Activated T-helper 2 cell treated with anti-CD3 and anti-CD28 coated beads, Interferon-gamma antibody, Interleukin-2, Interleukin-4, amounts not matched to agents 10 μg/mL and 5 μg/mL and 100 μg/mL, durations not matched to agents 14 hours and 24 hours and 36 hours (primary cell): ENCODE measurements at regions of chr17 and their contacts with region 1.

Region 1: GRCh38 chr17:40362696-40363110 is 1.8 kb downstream of the GJD3 start:
- DNase-seq: peak; percentile 85
- H3K4me3 Mint-ChIP-seq: peak overlapping the region; percentile 73
- H3K27ac Mint-ChIP-seq: no peak overlapping the region
- H3K4me1 Mint-ChIP-seq: peaks cover 17% of the 10 kb centered on the region
- H3K27me3 Mint-ChIP-seq: peaks cover 2% of the 10 kb centered on the region

Region 2: DNA sequence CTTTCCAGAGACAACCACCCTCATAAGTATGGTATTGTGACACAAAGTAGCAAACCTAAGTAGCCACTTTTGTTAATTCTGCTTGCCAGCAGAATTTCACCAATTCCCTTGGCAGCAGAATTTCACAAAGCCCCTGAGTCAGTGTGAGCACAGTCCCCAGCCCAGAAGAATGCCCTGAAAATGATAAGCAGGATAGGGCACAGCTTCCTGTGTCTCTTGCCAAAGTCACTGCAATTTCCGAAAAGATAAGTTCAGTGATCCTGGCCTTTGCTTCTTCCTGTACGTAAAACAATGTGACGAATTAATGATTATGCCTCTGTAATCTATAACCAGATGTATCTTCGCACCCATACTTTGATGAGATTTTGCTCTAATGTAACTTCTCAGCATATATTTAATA is 159.6 kb before region 1 on chr17:
- intact Hi-C with region 1: loop called (anchors 5 kb)
- DNase-seq: no peak
- H3K4me3 Mint-ChIP-seq: no peak overlapping the region
- H3K27ac Mint-ChIP-seq: no peak overlapping the region
- H3K4me1 Mint-ChIP-seq: peaks cover 3% of the 10 kb centered on the region
- H3K27me3 Mint-ChIP-seq: peaks cover 10% of the 10 kb centered on the region

Region 3: DNA sequence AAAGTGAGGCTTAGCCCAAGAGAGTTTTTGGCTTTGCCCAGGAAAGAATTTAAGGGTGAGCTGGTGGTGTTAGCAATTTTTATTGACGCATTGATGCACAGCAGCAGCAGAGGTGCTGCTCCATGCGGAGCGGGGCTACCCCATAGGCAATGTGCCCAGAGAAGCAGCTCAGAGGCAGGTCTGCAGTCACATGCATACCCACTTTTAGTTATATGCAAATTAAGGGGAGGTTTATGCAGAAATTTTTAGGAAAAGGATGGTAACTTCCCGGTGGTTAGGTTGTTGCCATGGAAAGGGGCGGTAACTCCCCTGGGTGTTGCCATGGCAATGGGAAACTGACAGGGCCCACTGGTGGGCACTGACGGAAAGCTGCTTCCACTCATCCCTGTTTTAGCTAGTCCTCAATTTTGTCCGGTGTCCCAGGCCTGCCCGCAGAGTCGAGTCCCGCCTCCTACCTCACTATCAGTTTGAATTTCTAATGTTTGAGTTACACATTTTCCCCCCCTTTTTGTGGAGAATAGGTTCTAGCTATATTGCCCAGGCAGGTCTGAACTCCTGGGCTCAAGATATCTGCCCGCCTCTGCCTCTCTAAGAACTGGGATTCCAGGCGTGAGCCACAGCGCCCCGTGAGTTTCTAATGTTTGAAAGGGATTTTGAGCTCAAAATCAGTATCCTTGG is 12.3 kb after region 1 on chr17:
- intact Hi-C with region 1: no loop called
- DNase-seq: no peak
- H3K4me3 Mint-ChIP-seq: no peak overlapping the region
- H3K27ac Mint-ChIP-seq: no peak overlapping the region
- H3K4me1 Mint-ChIP-seq: peaks cover 29% of the 10 kb centered on the region
- H3K27me3 Mint-ChIP-seq: peaks cover 2% of the 10 kb centered on the region

Region 4: GRCh38 chr17:40399185-40399584 is 36.5 kb after region 1 on chr17:
- intact Hi-C with region 1: loop called (anchors 5 kb)
- DNase-seq: no peak
- H3K4me3 Mint-ChIP-seq: no peak overlapping the region
- H3K27ac Mint-ChIP-seq: peak overlapping the region; percentile 60
- H3K4me1 Mint-ChIP-seq: peaks cover 26% of the 10 kb centered on the region
- H3K27me3 Mint-ChIP-seq: no peaks in the 10 kb centered on the region

Region 5: DNA sequence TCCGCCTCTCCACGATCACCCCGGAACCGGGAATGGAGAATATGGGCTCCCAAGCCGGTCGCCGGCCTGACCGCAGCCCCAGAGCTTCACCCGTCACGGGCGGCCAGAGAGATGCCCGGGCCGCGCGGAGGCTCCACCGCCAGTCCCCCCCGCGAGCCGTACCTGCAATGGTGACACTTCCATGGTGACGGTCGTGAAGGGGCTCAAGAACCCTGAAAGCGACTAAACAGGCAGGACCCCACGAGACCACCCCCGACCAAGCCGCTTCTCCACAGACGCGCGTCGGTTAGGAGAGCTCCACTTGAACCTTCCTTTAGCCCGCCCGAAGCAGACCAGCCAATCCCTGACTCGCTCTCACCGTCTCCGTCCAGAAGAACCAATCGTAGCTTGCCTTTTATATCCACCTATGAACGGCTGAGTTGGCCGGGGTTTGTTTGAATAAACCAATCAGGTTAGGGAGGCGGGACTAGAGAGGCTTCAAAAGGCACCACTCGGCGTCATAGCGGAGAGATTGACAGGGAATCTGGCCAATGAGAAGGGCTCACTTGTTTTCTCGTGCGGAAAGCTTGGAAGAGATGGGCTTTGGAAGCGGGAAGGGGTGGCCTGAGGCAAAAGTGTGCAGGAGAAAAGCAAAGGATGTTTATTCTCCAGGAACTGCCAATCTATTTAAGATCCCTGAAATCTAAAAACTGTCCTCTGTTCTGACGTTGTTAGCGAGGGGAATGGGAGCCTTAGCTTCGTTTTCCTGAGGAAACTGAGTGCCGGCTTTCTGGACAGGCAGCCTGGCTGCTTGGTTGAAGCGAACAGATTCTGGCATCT is 55.1 kb after region 1 on chr17 and contains the start of gene TOP2A:
- intact Hi-C with region 1: loop called (anchors 5 kb)
- DNase-seq: peak; percentile 98
- H3K4me3 Mint-ChIP-seq: peak within 1 kb of the TSS; percentile 95
- H3K27ac Mint-ChIP-seq: peak within 1 kb of the TSS; percentile 93
- H3K4me1 Mint-ChIP-seq: peaks cover 25% of the 10 kb centered on the region
- H3K27me3 Mint-ChIP-seq: no peaks in the 10 kb centered on the region
- total RNA-seq, gene TOP2A: 193 and 199 TPM in 2 replicates

Region 6: GRCh38 chr17:40443583-40444327 is 81.1 kb after region 1 on chr17:
- intact Hi-C with region 1: loop called (anchors 5 kb)
- DNase-seq: peak; percentile 66
- H3K4me3 Mint-ChIP-seq: peak overlapping the region; percentile 84
- H3K27ac Mint-ChIP-seq: peak overlapping the region; percentile 89
- H3K4me1 Mint-ChIP-seq: peaks cover 39% of the 10 kb centered on the region
- H3K27me3 Mint-ChIP-seq: no peaks in the 10 kb centered on the region

Region 7: GRCh38 chr17:40510328-40510648 is 147.6 kb after region 1 on chr17:
- intact Hi-C with region 1: no loop called
- DNase-seq: no peak
- H3K4me3 Mint-ChIP-seq: no peak overlapping the region
- H3K27ac Mint-ChIP-seq: no peak overlapping the region
- H3K4me1 Mint-ChIP-seq: peaks cover 24% of the 10 kb centered on the region
- H3K27me3 Mint-ChIP-seq: no peaks in the 10 kb centered on the region

Region 8: DNA sequence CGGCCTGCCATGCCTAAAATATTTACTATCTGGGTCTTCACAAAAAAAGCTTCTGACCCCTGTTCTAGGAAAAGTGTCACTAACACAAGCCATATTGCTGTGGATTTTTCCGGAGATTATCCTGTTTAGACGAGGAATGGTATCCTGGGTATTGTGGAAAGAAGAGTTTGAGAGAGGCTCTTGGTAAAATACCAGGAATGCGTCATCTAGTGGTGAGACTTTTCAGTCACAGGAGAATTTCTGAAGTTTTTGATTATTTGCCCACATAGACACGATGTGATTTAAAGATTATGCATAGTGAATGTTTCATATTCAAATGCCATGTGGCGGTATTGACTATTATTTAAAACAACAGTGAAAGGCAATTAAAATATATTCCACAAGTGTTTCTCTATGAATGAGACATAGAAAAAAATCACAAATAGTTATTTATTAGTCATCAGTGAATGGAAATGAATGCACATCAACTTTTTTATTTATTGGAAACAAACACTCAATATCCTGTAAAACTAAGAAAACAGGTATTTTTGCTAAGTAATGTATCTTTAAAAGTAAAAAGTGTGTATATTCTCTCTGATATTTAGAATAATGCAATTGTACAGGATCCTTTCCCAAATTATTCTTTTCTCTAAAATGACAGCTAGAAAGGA is 429.2 kb after region 1 on chr17:
- intact Hi-C with region 1: loop called (anchors 10 kb)
- DNase-seq: no peak
- H3K4me3 Mint-ChIP-seq: no peak overlapping the region
- H3K27ac Mint-ChIP-seq: no peak overlapping the region
- H3K4me1 Mint-ChIP-seq: no peaks in the 10 kb centered on the region
- H3K27me3 Mint-ChIP-seq: peaks cover 33% of the 10 kb centered on the region